HCT116 (cell line): ENCODE measurements at regions of chr7 and their contacts with region 1.

Region 1: GRCh38 chr7:93877742-93878141 is 12.8 kb downstream of the TFPI2 start:
- DNase-seq: no peak
- ATAC-seq: no peak
- H3K4me3 ChIP-seq: no peak overlapping the region
- H3K27ac ChIP-seq: no peak overlapping the region
- H3K4me1 ChIP-seq: no peaks in the 10 kb centered on the region
- H3K27me3 ChIP-seq: no peaks in the 10 kb centered on the region
- CTCF ChIP-seq: no peak
- POLR2A ChIP-seq: no peak
- RAD21 ChIP-seq: no peak

Region 2: GRCh38 chr7:93949461-93949860 is 71.7 kb after region 1 on chr7:
- CTCF ChIA-PET with region 1: no interaction called
- POLR2A ChIA-PET with region 1: no interaction called
- RAD21 ChIA-PET with region 1: no interaction called
- intact Hi-C with region 1: loop called (anchors 2 kb)
- DNase-seq: no peak
- ATAC-seq: no peak
- H3K4me3 ChIP-seq: no peak overlapping the region
- H3K27ac ChIP-seq: no peak overlapping the region
- H3K4me1 ChIP-seq: no peaks in the 10 kb centered on the region
- H3K27me3 ChIP-seq: no peaks in the 10 kb centered on the region
- CTCF ChIP-seq: no peak
- POLR2A ChIP-seq: no peak
- RAD21 ChIP-seq: no peak